ENCODE measurements at regions of chr5 and their contacts with region 1.

Region 1: DNA sequence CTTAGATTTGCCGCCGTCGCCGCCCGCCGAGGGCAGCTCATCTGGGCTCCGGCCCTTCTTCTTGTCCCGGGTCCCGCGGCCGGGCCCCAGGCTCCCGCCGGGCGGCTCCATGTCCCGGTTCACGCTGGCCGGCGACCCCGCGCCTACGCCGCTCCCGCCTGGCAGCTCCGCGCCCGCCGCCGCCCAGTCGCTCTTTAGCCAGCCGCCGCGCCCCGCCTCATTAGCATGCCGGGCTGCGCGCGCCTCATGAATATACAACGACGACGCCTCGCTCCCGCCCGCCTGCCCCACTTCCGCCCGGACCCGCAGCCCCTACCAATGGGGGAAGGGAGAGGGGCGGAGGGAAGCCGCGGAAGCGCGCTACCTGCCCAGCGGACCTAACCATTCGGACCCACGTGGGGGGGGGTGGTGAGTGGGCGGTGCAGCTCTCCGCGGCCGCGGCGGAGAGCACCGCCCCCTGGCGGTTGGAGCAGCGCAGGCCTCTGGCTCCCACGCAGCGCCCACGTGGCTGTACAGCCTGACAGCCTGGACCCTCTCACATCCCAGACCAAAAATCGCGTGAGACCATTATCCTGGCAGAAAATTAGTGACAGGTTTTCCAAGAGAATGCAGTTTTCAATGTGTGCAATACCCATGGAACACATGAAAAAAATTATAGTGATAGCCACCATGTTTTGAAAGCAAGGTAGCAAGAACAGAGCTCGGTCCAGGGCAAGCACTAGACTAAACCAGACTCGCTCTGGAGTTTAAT is at the start of gene DIAPH1:
- DNase-seq: peak; percentile 99
- ATAC-seq: peak; percentile 96
- total RNA-seq, gene DIAPH1: 32.0 TPM

Region 2: DNA sequence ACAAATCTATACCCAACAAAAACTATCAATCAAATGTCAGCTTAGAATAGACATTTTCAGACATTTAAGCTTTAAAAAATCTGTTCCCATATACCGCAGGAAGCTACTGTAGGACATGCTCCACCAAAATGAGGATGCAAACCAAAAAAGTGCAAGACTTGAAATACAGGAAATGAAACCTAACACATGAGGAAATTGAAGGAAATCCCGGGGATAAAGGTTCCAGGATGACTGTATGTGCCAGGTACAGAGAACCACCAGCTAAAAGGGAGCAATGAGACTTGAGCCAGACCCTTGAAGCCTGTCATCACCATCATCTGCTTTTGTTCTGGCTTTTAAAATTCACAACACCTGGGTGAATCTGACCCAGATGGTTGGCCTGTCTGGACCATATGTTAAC is 21.6 kb before region 1 on chr5:
- intact Hi-C with region 1: loop called (anchors 1 kb)
- DNase-seq: no peak
- ATAC-seq: peak; percentile 14

Region 3: DNA sequence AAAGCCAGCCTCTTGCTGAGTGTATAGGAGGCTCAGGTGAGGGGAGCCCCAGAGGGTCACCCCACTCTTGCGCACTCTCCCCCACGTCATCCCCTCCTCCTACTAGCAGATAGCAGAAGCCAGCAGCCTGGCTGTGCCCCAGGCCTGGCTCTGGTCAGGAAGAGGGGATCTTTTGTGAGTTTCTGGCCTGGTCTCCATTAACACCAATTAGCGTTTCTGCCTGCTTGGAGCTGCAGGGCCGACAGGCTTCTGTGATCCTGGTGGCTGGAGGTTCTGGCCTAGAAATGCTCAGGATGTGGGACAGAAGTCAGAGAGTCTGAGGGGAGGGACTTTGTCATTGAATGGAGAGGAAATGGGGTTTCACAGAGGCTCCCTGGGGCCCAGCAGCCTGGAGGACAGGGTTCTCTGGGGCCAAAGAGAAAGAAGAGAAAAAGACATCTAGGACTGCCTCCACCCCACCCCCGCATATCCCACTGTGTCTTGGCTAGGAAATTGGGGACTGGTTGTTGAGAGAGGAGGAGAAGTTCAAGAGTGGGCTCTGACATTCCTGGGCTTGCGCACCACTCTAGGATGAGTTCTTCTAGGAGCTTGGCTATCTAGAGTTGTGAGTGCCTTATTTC is 110.5 kb after region 1 on chr5:
- intact Hi-C with region 1: no loop called
- DNase-seq: no peak
- ATAC-seq: no peak